HAP-1 (cell line): ENCODE measurements at regions of chr17 and their contacts with region 1.

Region 1: GRCh38 chr17:40536295-40537171 is 28.7 kb downstream of the CCR7 start:
- DNase-seq: no peak
- H3K4me3 ChIP-seq: no peak overlapping the region
- H3K4me1 ChIP-seq: no peaks in the 10 kb centered on the region
- H3K27me3 ChIP-seq: no peaks in the 10 kb centered on the region

Region 2: GRCh38 chr17:40437095-40437732 is 99.3 kb before region 1 on chr17:
- in situ Hi-C with region 1: loop called (anchors 5 kb)
- DNase-seq: no peak
- H3K4me3 ChIP-seq: no peak overlapping the region
- H3K4me1 ChIP-seq: no peaks in the 10 kb centered on the region
- H3K27me3 ChIP-seq: no peaks in the 10 kb centered on the region